ENCODE measurements at regions of chr3 and their contacts with region 1.

Region 1: GRCh38 chr3:73086071-73086494 is 24.6 kb downstream of the EBLN2 start:
- DNase-seq: peak; percentile 54
- H3K4me3 Mint-ChIP-seq: no peak overlapping the region
- H3K27ac Mint-ChIP-seq: no peak overlapping the region
- H3K4me1 Mint-ChIP-seq: no peaks in the 10 kb centered on the region
- H3K27me3 Mint-ChIP-seq: no peaks in the 10 kb centered on the region
- CTCF ChIP-seq: peak; percentile 78

Region 2: DNA sequence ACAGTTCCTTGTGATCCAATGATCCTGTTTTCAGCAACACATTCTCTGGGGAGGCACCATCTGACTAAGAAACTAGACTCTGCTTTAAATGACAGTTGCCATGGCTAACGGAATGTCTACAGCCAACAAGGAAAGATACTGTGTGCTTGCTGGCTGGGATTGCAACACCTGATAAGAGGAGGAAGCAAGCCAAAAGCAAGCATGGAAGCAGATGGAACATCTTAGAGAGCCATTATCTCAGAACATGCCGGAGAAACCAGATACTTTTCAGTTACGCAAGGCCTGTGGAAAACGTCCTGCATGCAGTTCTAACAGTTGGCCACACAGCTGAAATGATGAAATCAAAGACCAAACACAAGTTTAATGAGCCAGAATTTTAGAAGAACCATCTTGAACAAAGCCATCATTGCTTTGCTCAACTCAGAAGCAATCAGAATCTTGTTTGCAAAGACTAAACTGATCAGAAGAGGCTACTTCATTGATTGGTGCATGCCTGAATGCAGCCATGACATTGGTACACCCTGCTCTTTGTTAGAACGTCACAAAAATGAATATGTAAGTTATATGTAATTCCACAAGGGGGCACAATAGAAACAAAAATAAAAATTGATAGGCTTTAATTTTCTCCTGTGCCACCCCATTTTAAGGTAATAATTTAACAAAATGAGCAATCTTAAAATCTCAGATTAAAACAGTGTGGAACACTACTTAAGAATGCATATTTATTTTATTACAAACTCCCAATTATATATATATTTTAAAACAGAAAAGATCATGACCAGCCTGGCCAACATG is 147.4 kb before region 1 on chr3:
- CTCF ChIA-PET with region 1: interaction called, 23 read pairs
- POLR2A ChIA-PET with region 1: interaction called, 3 read pairs
- intact Hi-C with region 1: loop called (anchors 1 kb)
- DNase-seq: peak; percentile 76
- H3K4me3 Mint-ChIP-seq: peak overlapping the region; percentile 13
- H3K27ac Mint-ChIP-seq: no peak overlapping the region
- H3K4me1 Mint-ChIP-seq: peaks cover 12% of the 10 kb centered on the region
- H3K27me3 Mint-ChIP-seq: no peaks in the 10 kb centered on the region
- CTCF ChIP-seq: peak; percentile 71

Region 3: GRCh38 chr3:72944696-72945095 is 141.4 kb before region 1 on chr3:
- CTCF ChIA-PET with region 1: interaction called, 23 read pairs
- POLR2A ChIA-PET with region 1: no interaction called
- intact Hi-C with region 1: no loop called
- DNase-seq: no peak
- H3K4me3 Mint-ChIP-seq: no peak overlapping the region
- H3K27ac Mint-ChIP-seq: no peak overlapping the region
- H3K4me1 Mint-ChIP-seq: peaks cover 8% of the 10 kb centered on the region
- H3K27me3 Mint-ChIP-seq: no peaks in the 10 kb centered on the region
- CTCF ChIP-seq: no peak

Region 4: DNA sequence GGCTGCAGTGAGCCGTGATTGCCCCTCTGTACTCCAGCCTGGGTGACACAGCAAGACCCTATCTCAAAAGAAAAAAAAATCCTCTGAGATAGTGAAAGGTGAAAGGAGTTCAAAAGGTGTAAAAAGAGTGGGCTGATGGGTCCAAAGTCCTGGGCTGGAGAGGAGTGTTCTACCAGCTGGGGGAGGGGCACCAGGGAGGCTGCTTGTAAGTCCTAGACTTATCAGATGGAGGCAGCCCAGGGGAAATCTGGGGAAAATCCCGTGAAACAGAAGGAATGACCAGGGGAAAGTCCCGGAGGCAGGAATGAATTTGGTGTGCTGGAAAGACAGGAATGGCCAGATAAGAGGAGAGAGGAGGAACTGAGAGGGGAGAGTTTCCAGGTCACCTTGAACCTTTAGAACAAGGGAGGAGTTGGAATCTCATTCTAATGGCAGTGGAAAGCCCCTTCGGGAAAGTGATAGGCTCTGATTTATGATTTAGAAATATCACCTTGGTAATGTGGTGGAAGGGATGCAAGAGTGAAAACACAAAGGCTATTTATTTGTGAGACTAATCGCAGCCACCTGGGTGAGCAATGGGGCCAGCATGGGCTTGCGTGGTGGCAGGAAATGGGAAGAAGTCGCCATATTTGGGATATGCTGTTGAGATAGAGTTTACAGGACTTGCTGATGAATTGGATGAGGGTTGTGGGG is 112.9 kb before region 1 on chr3:
- CTCF ChIA-PET with region 1: no interaction called
- POLR2A ChIA-PET with region 1: no interaction called
- intact Hi-C with region 1: no loop called
- DNase-seq: no peak
- H3K4me3 Mint-ChIP-seq: no peak overlapping the region
- H3K27ac Mint-ChIP-seq: no peak overlapping the region
- H3K4me1 Mint-ChIP-seq: peaks cover 6% of the 10 kb centered on the region
- H3K27me3 Mint-ChIP-seq: no peaks in the 10 kb centered on the region
- CTCF ChIP-seq: no peak

Region 5: DNA sequence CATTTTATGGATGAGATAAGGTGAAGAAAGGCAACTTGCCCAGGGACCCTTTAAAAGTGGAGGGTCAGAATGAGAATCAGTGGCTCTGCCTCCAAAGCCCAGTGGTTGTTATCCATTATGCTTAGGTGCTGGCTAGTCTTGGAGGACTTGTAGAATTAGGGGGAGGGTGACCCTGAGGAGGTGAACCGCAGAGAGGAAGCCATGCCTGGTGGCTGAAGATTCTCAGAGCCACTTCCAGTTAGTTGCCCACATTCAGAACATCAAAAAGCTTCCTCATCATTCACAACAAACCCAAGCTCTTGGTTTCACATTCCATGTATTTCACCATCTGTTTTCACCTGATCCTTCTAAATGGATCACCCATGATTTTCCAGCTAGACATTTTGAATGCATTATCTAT is 13.4 kb before region 1 on chr3:
- CTCF ChIA-PET with region 1: interaction called, 14 read pairs
- POLR2A ChIA-PET with region 1: no interaction called
- intact Hi-C with region 1: no loop called
- DNase-seq: no peak
- H3K4me3 Mint-ChIP-seq: no peak overlapping the region
- H3K27ac Mint-ChIP-seq: no peak overlapping the region
- H3K4me1 Mint-ChIP-seq: no peaks in the 10 kb centered on the region
- H3K27me3 Mint-ChIP-seq: no peaks in the 10 kb centered on the region
- CTCF ChIP-seq: no peak

Region 6: GRCh38 chr3:73121669-73122331 is 35.7 kb after region 1 on chr3:
- CTCF ChIA-PET with region 1: no interaction called
- POLR2A ChIA-PET with region 1: no interaction called
- intact Hi-C with region 1: no loop called
- DNase-seq: no peak
- H3K4me3 Mint-ChIP-seq: no peak overlapping the region
- H3K27ac Mint-ChIP-seq: no peak overlapping the region
- H3K4me1 Mint-ChIP-seq: no peaks in the 10 kb centered on the region
- H3K27me3 Mint-ChIP-seq: peaks cover 5% of the 10 kb centered on the region
- CTCF ChIP-seq: no peak

Region 7: DNA sequence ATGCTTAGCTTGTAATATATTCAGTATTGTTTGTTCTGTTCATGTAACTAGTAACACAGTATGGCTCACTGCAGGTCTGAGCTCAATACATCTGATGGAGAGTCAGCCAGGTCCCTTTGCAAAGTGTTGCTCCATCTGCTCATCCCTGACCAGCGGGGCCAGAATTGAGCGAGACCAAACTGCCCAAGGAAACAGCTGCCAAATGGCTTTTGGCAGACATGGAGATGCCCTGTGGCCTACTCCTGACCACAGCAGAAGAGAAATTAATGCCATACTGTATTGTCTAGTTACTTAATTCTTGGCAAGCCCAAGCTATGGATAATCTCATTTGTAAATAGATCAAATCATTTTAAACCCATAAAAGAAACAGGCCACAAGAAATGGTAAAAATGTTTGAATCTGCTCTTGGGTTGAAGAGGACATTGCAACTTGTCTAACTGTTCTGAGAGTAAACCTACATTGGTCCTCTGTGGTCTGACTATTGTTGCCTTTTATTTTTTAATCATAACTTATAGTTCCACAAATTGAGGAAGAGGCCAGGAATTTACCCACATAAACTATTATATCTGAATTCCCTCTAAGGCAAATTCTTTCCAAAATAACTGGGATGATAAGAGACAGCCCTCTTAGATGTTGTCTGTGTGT is 184.9 kb after region 1 on chr3:
- CTCF ChIA-PET with region 1: no interaction called
- POLR2A ChIA-PET with region 1: no interaction called
- intact Hi-C with region 1: no loop called
- DNase-seq: no peak
- H3K4me3 Mint-ChIP-seq: no peak overlapping the region
- H3K27ac Mint-ChIP-seq: no peak overlapping the region
- H3K4me1 Mint-ChIP-seq: no peaks in the 10 kb centered on the region
- H3K27me3 Mint-ChIP-seq: peaks cover 8% of the 10 kb centered on the region
- CTCF ChIP-seq: no peak